Right ventricle myocardium inferior (tissue), 1 donor: ENCODE measurements at regions of chr2 and their contacts with region 1.

Region 1: GRCh38 chr2:85132834-85133637 is at the start of gene TCF7L1:
- DNase-seq: peak; percentile 89
- ATAC-seq: peak; percentile 96
- total RNA-seq, gene TCF7L1: 9.3 TPM

Region 2: DNA sequence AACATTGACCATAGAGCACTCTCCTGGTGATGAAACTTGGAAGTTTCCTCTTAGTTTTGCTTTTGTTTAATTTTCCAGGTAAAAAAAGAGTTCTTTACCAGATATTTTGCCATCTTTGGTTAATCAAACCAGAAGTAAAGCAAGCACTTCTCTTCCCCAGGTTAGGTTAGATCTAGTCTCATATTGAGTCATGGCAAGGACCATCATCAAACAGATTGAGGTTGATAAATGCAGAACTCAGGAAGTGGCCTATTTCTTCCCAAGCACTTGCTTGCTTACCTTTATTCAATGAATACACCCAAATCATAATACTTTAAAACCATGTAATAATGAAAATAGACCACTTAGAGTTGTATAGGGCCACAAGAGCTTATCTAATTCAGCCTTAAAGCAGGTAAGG is 593.3 kb before region 1 on chr2:
- intact Hi-C with region 1: no loop called
- DNase-seq: no peak
- ATAC-seq: no peak

Region 3: GRCh38 chr2:85066874-85067351 is 66.1 kb before region 1 on chr2:
- intact Hi-C with region 1: loop called (anchors 2 kb)
- DNase-seq: peak; percentile 78
- ATAC-seq: peak; percentile 79

Region 4: GRCh38 chr2:85089585-85089984 is 43.5 kb before region 1 on chr2:
- intact Hi-C with region 1: no loop called
- DNase-seq: no peak
- ATAC-seq: no peak

Region 5: DNA sequence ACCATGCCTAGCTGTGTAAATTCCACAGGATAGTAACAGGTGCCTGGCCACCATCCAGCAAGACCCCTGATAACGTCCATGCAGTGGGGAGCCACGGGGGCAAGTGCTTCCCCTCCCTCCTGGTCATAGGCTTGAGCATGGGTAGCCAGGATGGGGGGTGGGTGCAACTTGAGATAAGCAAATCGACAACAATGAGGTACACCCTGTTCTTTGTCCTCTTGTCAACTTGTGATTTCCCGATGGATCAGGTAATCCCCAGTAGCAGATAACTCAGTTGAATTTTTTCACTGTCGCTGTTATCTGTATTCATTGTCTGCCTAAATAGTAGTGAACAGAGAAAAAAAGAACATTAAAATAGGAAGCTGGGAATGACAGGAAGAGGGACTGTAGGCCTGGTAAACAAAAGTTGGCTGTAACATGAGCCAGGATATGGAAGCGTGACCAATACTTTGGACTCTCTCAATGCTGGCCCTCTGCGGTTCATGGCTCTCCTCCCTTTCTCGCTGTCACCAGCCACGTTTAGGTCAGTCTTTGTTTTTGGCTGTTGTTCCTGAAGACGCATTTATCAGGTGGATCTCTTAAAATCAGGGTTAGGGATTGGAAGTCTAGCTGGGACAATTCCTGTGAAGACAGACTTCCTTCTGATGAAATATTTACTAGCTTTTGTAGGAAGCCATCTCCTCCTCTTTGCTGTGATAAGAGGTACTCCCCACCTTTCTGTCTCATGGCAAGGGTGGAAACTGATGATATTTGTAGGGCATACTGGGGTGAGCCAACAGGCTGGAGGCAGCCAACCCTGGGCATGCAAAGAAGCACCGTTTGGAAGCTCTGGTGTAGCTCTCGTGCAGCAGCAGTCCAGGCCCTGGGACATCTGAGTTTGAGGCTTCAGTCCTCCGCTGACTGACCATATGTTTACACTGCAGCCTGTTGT is 42.6 kb after region 1 on chr2:
- intact Hi-C with region 1: loop called (anchors 5 kb)
- DNase-seq: no peak
- ATAC-seq: peak; percentile 71

Region 6: DNA sequence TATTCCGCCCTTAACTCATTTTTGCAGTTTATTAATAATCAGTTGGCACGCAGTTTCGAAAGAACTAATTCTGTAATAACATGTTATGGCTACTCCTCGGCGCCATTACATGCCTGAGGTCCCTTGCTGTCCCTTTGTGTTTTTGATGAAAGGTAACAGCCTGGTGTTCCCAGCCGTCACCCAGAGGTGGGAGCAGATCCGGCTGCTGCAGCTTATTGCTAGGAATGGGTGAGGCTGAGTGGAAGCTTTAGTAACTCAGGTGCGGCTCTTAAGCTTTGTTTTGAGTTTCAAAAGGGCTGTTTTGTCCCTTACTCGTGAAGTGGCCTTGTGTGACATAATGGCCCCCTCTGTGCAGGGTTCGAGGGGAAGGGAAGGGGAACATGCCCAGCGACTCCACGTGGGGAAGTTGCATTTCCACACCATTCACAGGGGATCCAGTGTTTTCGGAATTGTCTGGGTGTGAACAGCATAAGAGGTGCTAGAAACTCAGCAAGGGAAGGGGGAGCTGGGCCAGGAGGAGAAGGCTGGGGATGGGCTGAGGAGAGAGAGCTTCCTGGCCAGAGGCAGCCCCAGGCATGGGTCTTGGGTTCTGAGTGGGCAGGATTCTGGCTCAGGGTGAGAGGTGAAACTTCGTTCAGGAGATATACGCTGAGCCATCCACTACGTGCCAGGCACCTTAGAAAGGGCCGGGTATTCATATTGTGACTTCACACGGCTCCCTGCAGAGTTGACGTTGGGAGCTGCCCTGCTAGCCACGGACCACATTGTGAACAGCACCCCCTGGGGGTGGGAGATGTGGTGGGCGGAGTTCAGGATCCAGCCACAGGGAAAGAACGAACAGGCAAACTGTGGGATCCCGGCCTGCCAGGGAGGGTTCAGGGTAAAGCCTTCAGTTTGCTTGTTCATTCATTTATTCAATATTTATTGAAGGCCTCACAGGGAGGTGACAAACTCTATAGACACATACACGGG is 110.4 kb after region 1 on chr2:
- intact Hi-C with region 1: loop called (anchors 2 kb)
- DNase-seq: no peak
- ATAC-seq: peak; percentile 45

Region 7: DNA sequence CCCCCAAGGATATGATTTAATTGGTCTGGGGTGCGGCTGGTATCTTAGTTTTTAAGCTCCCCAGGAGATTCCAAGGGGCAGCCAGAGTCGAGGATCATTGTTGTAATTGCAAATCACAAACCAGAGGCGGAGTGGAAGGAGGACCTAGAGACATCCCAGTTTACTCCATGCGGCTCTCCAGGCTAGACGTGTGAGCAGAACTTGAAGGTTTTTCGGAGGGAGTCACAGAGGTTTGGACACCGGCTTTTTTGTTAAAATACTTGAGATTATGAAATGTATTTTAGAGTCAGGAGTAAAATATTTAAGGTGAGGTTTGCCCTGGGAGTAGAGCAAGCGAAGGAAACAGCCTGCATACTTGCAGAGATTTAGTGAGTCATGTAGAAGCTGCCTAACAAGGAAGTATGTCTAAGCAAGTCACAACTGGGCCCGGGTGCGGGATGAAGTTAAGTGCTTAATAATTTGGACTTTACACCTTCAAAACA is 155.2 kb after region 1 on chr2:
- intact Hi-C with region 1: loop called (anchors 1 kb)
- DNase-seq: no peak
- ATAC-seq: no peak

Region 8: GRCh38 chr2:85396531-85397470 is 263.8 kb after region 1 on chr2:
- intact Hi-C with region 1: no loop called
- DNase-seq: no peak
- ATAC-seq: no peak